IMR-90 (cell line): ENCODE measurements at regions of chr6 and their contacts with region 1.

Region 1: DNA sequence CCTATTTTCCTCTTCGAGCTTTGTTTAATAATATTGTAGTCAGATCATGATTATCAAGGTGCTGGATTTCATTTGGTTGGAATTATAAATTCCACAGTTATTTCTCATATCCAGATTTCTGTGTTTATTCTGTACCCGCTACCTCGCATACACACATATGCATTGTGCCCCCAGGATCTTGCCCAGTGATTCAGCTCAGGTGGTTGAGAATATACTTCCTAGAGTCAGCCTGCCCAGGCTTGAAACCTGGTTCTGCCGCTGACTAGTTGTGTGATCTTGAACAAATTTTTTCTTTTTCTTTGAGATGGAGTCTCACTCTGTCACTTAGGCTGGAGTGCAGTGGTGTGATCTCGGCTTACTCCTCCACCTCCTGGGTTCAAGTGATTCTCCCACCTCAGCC is 14.7 kb downstream of the GINM1 start:
- DNase-seq: no peak
- ATAC-seq: no peak
- H3K4me3 ChIP-seq: no peak overlapping the region
- H3K27ac ChIP-seq: no peak overlapping the region
- H3K4me1 ChIP-seq: no peaks in the 10 kb centered on the region
- H3K27me3 ChIP-seq: no peaks in the 10 kb centered on the region
- CTCF ChIP-seq: no peak
- POLR2A ChIP-seq: no peak
- RAD21 ChIP-seq: no peak

Region 2: GRCh38 chr6:149614337-149614736 is 33.5 kb after region 1 on chr6:
- CTCF ChIA-PET with region 1: no interaction called
- POLR2A ChIA-PET with region 1: no interaction called
- dilution Hi-C with region 1: no loop called
- in situ Hi-C with region 1: no loop called
- intact Hi-C with region 1: loop called (anchors 5 kb)
- DNase-seq: peak; percentile 41
- ATAC-seq: no peak
- H3K4me3 ChIP-seq: no peak overlapping the region
- H3K27ac ChIP-seq: no peak overlapping the region
- H3K4me1 ChIP-seq: no peaks in the 10 kb centered on the region; the same call in 1 of the 2 replicates
- H3K27me3 ChIP-seq: no peaks in the 10 kb centered on the region
- CTCF ChIP-seq: no peak
- POLR2A ChIP-seq: no peak
- RAD21 ChIP-seq: no peak

Region 3: GRCh38 chr6:149651056-149651455 is 70.2 kb after region 1 on chr6:
- CTCF ChIA-PET with region 1: no interaction called
- POLR2A ChIA-PET with region 1: no interaction called
- dilution Hi-C with region 1: no loop called
- in situ Hi-C with region 1: no loop called
- intact Hi-C with region 1: no loop called
- DNase-seq: no peak
- ATAC-seq: no peak
- H3K4me3 ChIP-seq: no peak overlapping the region
- H3K27ac ChIP-seq: no peak overlapping the region
- H3K4me1 ChIP-seq: no peaks in the 10 kb centered on the region
- H3K27me3 ChIP-seq: no peaks in the 10 kb centered on the region
- CTCF ChIP-seq: no peak
- POLR2A ChIP-seq: no peak
- RAD21 ChIP-seq: no peak